ENCODE measurements at regions of chr17 and their contacts with region 1.

Region 1: DNA sequence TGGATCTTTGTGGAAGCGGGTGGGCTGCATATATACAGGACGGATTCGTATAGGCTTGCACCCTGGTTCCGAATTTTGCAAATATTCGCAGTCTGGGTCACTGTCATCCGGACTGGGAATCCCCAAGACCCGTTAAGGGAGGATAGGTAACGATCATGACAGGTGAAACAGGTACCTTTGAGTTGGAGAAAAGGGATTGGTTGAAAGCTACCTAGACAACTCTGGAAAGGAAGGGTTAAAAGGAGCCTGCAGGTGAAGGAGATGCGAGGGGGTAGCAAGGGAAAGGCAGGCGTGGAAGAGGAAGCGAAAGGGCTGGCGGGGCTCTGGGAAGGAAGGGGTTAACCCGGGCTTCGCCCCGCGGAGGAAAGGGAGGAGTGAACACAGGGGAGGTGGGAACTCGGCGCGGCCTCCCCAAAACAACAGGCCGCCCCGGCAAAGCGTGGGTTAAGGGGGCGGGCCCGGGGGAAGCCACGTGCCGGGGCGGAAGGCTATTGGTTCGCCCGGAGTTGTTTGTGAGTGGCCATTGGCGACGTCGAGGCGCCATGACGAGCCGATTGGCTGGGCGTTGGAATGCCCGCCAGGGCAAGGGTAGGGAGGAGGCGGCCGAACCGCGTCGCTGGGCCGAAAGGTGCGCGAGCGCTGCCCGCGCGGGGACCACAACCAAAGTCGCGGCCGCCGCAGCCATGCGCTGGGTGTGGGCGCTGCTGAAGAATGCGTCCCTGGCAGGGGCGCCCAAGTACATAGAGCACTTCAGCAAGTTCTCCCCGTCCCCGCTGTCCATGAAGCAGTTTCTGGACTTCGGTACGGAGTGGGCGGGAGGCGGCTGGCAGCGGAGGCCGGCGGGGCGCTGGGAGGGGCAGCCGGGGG is at the start of gene PDK2:
- H3K4me3 ChIP-seq: peak within 1 kb of the TSS; percentile 85
- H3K27ac ChIP-seq: peak within 1 kb of the TSS; percentile 45
- H3K4me1 ChIP-seq: peaks cover 2% of the 10 kb centered on the region; the same call in 1 of the 2 replicates
- CTCF ChIP-seq: no peak; the same call in none of the 2 replicates

Region 2: DNA sequence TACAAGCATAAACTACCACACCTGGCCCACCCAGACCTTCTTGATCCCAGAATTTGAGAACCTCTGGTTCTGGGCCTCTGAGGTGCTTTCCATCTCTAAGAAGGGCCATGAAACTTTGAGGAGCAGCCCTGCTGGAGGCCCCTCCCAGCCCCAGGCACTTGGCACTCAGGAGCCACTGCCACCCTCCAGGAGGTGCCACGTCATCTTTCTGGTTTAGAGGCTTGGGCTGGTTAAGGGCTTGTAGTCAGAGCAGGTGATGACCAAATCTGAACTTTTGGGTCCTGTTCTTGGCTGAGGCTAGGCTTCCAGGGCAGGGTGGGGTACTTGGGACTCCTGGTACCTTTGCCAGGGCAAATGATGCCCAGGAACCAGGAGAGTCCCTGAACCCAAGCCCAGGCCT is 139.8 kb before region 1 on chr17:
- CTCF ChIA-PET with region 1: no interaction called
- POLR2A ChIA-PET with region 1: no interaction called
- H3K4me3 ChIP-seq: no peak overlapping the region
- H3K27ac ChIP-seq: no peak overlapping the region
- H3K4me1 ChIP-seq: no peaks in the 10 kb centered on the region
- CTCF ChIP-seq: no peak

Region 3: DNA sequence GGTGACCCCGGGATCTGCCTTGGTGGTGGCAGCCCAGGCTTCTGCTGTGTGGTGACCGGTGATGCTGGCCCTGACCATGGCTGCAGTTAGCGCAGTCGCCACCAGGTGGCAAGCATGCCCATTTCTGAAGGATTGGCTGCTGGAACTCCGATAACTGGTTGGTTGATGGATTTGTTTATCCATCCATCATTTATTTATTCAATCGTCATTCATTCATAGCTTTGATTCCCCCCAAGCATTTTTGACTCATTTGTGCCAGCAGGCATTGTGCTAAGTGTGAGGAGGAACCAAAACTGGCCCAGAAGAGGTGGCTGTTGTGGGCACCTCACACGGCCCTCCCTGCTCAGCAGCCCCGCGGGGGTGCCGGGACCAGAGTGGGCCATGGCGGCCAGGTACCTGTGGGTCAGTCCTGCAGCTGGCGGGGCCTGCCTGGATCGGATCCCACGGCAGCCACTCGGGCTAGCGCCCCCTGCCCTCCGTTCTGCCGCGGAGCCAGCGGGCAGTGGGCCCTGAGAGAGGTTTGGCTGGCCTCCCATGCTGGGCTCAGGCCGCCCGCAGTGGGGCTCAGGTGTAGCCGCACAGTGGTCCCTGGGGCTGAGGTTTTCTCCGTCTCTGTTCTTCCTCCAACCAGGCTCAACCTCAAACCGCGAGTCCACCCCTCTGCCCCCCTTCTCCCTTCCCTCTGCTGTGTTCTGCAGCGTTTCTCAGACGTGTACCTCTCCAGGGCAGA is 67.9 kb before region 1 on chr17:
- CTCF ChIA-PET with region 1: interaction called, 101 read pairs
- POLR2A ChIA-PET with region 1: no interaction called
- H3K4me3 ChIP-seq: peak overlapping the region; percentile 11
- H3K27ac ChIP-seq: no peak overlapping the region
- H3K4me1 ChIP-seq: no peaks in the 10 kb centered on the region
- CTCF ChIP-seq: peak; percentile 53

Region 4: DNA sequence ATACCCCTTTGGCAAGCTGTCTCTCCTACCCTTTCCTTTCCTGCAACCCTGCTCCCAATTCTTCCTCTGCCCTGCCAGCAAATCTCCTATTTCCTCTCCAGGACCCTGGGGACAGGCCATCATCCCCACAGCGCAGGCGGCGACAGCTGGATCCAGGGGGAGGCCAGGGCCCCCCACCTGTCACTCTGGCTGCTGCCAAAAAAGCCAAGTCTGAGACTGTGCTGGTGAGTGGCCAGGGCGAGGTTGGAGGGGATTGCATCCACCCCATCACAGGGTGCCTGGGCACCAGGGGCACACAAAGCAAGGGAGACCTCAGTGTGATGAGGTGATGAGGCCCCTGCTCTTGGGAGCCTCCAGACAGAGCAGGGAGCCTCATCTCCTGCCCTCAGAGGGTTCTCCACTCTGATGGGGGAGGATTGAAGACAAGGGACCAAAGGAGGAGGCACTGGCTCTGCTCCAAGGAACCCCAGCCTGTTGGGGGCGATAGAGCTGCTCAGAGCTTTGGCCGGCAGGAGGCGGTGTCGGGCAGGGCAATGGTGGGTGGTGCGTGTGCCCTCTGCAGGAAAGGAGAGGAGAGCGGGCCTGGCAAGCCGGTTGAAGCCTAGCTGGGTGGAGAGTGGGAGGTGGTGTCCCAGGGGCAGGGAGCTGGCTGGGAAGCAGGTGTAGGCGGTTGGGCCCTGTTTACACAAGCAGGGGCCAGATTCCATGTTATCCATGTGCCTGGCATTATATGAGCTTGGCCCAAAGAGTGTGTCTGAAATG is 15.5 kb before region 1 on chr17:
- CTCF ChIA-PET with region 1: interaction called, 33 read pairs
- POLR2A ChIA-PET with region 1: no interaction called
- H3K4me3 ChIP-seq: no peak overlapping the region
- H3K27ac ChIP-seq: no peak overlapping the region
- H3K4me1 ChIP-seq: no peaks in the 10 kb centered on the region
- CTCF ChIP-seq: peak; percentile 87

Region 5: GRCh38 chr17:50151041-50151936 is 56.3 kb after region 1 on chr17:
- CTCF ChIA-PET with region 1: interaction called, 41 read pairs
- POLR2A ChIA-PET with region 1: interaction called, 12 read pairs
- H3K4me3 ChIP-seq: peak overlapping the region; percentile 77
- H3K27ac ChIP-seq: peak overlapping the region; percentile 93
- H3K4me1 ChIP-seq: peaks cover 15% of the 10 kb centered on the region
- CTCF ChIP-seq: peak; percentile 67

Region 6: DNA sequence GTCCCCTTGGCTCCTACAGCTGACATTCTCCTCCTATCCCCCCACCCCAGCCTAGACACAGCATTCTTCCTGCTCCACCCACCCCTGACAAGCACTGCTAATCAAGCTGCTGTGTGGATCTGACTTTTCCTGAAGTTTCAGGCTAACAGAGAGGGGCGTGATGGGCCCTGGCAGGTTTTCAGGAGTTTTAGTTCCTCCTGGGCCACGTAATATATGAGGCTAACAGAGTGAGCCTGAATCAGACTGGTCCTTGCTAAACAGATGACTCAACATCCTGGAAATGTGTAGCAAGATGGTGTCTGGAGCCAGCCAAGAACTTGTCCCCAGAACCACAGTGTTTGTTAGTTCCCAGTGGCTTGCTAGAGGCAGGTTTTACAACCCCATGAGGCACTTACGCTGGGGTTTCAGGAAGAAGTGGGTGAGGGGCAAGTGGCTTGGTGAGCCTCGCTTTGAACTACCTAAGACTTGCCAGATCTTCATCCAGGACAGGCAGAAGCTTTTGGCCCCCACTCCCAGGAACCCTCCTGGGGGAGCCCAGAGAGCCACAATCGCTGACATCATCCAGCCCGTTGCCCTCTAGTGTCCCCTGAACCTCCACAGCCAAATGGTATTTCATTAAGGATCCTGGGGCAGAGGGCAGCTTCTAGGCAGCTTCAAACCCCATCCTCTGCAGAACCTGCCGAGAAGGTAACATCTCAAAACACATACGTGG is 195.2 kb after region 1 on chr17:
- CTCF ChIA-PET with region 1: interaction called, 61 read pairs
- POLR2A ChIA-PET with region 1: no interaction called
- H3K4me3 ChIP-seq: no peak overlapping the region
- H3K27ac ChIP-seq: no peak overlapping the region
- H3K4me1 ChIP-seq: peaks cover 5% of the 10 kb centered on the region; the same call in 1 of the 2 replicates
- CTCF ChIP-seq: no peak

Measured in HEK293 (cell line).